CD4-positive, alpha-beta T cell (primary cell): ENCODE measurements at regions of chr1 and their contacts with region 1.

Region 1: DNA sequence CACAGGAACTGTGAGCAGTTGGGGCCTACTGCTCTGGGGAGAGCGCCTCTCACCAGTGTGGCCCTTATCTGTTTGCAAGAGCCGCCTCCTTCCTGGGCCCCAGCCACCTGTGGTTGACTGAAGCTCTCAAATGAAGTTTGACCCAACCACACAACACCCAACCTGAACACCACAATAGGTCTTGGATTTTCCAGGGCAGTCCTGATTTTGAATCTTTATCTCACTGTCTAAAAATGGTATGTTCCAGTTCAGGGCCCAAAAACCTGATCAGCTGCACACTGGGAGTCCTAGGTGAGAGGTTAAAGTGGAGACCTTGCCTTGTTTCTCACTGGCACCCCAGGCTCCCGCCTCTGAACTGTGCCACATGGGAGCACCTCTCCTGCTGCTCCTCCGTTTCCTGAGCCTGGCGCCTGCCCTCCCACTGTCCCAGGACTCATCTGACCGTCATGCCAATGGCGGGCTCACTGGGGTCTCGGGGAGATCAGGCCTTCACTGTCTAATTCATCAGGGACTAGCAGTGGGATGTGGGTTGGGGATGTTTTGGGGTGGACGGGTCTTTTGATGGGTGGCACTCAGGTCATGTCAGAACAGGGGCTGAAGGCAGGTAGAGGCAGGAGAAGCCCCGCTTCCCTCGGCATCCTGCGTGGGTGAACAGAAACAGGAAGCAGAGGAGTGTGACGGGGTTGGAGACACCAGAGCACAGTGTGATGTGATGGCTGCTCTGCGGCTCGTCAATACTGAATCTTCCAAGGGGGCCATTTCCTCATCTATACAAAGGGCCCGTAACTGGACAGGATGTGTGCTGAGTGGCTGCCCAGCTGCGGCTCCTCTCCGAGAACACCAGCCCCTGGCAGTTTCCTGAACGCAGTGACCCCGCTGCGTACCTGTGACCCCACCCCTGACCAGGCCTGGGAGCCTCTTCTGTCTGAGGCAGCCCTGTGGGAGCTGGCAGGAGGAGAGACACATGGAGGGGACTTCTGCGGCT is 59.6 kb upstream of the ITPKB start:
- DNase-seq: peak; percentile 43 to 87 (median 53)
- ATAC-seq: peak; percentile 84
- H3K4me3 ChIP-seq: no peak overlapping the region
- H3K4me3 Mint-ChIP-seq: peak overlapping the region; percentile 67
- H3K27ac ChIP-seq: peak overlapping the region; percentile 68 to 86
- H3K27ac Mint-ChIP-seq: peak overlapping the region; percentile 98
- H3K4me1 ChIP-seq: peaks cover 36% of the 10 kb centered on the region
- H3K4me1 Mint-ChIP-seq: peaks cover 39% of the 10 kb centered on the region
- H3K27me3 ChIP-seq: no peaks in the 10 kb centered on the region
- H3K27me3 Mint-ChIP-seq: no peaks in the 10 kb centered on the region
- CTCF ChIP-seq: no peak

Region 2: DNA sequence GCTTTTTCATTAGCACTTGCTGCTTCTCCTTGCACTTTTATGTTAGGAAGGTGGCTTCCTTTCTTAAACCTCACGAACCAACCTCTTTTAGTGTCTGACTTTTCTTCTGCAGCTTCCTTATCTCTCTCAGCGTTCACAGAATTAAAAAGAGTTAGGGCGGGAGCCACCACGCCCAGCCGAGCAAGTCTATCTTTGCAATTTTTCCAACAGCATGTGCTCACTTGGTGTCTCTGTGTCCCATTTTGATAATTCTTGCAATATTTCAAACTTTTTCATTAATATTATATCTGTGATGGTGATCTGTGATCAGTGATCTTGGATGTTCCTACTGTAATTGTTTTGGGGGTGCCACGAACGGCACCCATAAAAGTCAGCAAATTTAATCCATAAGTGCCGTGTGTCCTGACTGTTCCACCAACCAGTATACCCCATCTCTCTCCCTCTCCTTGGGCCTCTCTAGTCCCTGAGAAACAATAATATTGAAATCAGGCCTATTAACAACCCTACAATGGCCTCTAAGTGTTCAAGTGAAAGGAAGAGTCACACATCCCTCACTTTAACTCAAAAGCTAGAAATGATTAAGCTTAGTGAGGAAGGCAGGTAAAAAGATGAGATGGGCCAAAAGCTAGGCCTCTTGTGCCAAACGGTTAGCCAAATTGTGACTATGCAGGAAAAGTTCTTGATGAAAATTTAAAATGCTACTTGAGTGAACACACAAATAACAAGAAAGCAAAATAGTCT is 43.8 kb before region 1 on chr1:
- CTCF ChIA-PET with region 1: no interaction called
- POLR2A ChIA-PET with region 1: interaction called, 3 read pairs
- intact Hi-C with region 1: loop called in 1 of 2 experiments (anchors 5 kb)
- DNase-seq: no peak
- ATAC-seq: peak; percentile 37
- H3K4me3 ChIP-seq: no peak overlapping the region
- H3K4me3 Mint-ChIP-seq: peak overlapping the region; percentile 8
- H3K27ac ChIP-seq: no peak overlapping the region
- H3K27ac Mint-ChIP-seq: peak overlapping the region; percentile 26
- H3K4me1 ChIP-seq: peaks cover 17% of the 10 kb centered on the region
- H3K4me1 Mint-ChIP-seq: peaks cover 39% of the 10 kb centered on the region
- H3K27me3 ChIP-seq: no peaks in the 10 kb centered on the region
- H3K27me3 Mint-ChIP-seq: no peaks in the 10 kb centered on the region
- CTCF ChIP-seq: no peak

Region 3: DNA sequence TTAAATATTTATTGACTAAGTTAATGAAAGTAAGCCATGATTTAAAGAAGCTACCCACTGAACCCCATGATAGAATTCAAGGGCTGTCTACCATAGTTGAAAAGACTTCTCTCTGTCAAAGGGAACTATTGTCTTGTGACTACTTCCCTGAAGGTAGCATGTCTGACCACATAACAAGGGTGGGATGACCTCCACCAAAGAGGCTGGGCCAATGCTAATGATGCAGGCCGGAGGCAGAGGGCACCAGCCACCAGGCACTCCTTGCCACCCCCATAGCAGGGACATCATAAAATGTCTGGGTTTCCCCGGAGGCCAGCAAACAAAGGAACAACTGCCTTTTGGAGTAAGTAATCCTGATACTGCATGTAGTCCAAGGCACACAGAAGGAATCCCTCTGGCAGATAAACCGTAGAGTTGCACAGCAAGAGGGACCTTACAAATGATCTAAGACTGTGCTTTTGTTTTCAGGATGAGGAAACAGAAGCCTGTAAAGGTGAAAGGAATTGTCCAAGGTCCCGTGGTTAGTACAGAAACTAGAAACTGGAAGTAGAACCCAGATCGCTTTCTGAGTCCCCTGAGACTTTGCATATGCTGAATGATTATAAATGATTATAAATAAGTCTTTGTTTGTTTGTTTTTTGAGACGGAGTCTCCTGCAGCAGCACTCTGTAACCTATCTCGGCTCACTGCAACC is 26.1 kb before region 1 on chr1:
- CTCF ChIA-PET with region 1: no interaction called
- POLR2A ChIA-PET with region 1: no interaction called
- intact Hi-C with region 1: no loop called
- DNase-seq: no peak
- ATAC-seq: no peak
- H3K4me3 ChIP-seq: no peak overlapping the region
- H3K4me3 Mint-ChIP-seq: no peak overlapping the region
- H3K27ac ChIP-seq: no peak overlapping the region
- H3K27ac Mint-ChIP-seq: no peak overlapping the region
- H3K4me1 ChIP-seq: no peaks in the 10 kb centered on the region
- H3K4me1 Mint-ChIP-seq: no peaks in the 10 kb centered on the region
- H3K27me3 ChIP-seq: no peaks in the 10 kb centered on the region
- H3K27me3 Mint-ChIP-seq: no peaks in the 10 kb centered on the region
- CTCF ChIP-seq: no peak